ENCODE measurements at regions of chr1 and their contacts with region 1.

Region 1: DNA sequence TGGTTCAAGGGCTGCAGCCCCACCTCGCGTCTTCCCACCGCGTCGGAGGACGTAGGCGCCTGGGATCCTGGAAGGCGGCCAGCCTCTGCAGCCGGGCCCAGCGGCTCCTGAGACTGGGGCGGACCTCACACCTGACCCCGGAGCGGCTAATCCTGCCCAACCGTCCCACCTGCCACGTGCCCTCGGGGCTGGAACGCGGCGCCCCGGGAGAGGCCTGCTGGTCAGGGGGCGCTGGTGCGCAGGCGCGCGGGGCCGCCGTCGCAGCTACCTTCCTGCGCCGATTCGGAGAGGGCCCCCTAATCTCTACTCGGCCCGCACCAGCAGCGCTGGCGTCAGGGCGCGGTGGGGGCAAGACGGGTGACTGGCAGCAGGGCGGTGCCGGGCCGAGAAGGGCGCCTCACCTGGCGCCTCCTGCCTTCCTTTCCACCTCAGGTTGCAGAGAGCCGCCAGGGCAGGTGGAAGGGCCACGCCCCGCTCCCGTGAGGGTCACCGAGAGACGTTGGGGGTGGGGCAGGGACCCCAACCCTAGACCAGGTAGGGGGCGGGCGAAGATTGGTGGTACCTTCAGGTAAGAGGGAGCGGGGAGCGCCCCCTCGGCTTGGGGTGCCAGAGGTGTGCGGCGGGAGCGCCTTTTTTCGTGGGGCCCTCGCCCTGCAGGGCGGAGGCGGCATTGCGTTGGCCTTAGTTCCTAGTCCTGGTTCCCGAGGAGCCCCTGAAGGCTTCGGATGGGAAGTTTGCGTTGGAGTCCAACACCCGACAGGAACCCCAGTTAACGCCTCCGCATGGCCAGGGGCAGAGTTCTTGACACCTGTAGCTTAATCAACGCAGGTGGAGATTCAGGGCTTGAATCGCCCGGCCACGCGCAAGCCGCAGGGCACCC is at the start of gene TDRD5:
- DNase-seq: no peak
- H3K4me3 ChIP-seq: no peak within 1 kb of the TSS
- H3K27ac ChIP-seq: no peak within 1 kb of the TSS
- H3K4me1 ChIP-seq: peaks cover 6% of the 10 kb centered on the region
- H3K27me3 ChIP-seq: no peaks in the 10 kb centered on the region
- CTCF ChIP-seq: no peak
- POLR2A ChIP-seq: no peak
- total RNA-seq, gene TDRD5: not detected

Region 2: DNA sequence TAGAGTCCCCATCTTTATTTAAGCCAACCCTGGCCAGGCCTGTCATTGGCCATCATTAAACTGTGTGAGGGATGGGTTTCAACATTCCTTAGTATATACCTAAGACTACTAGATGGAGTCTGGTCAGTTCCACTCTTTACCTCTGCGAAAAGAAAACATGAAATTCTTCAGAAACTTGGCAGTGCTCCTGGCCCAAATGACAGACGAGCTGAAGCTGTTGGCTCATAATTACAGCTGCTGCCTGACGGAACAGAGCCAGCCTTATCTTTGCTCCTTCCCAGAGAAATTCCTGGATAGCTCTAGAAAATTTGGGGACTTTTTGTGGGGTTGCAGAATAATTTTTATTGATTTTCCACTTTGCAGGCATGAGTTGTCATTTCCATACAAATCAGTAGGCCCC is 46.5 kb before region 1 on chr1:
- intact Hi-C with region 1: loop called (anchors 1 kb)
- DNase-seq: no peak
- H3K4me3 ChIP-seq: no peak overlapping the region
- H3K27ac ChIP-seq: no peak overlapping the region
- H3K4me1 ChIP-seq: no peaks in the 10 kb centered on the region
- H3K27me3 ChIP-seq: no peaks in the 10 kb centered on the region
- CTCF ChIP-seq: no peak
- POLR2A ChIP-seq: no peak

Region 3: DNA sequence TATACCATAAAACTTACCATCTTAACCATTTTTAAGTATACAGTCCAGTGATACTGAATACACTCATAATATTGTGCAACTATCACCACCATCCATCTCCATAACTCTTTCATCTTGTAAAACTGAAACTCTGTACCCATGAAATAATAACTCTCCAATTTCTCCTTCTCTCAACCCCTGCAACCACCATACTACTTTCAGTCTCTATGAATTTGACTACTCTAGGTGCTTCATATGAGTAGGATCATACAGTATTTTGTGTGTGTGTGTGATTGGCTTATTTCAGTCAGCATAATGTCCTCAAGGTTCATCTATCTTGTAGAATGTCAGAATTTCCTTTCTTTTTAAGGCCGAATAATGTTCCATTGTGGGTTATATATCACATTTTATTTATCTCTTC is 33.8 kb before region 1 on chr1:
- intact Hi-C with region 1: no loop called
- DNase-seq: no peak
- H3K4me3 ChIP-seq: no peak overlapping the region
- H3K27ac ChIP-seq: no peak overlapping the region
- H3K4me1 ChIP-seq: no peaks in the 10 kb centered on the region
- H3K27me3 ChIP-seq: no peaks in the 10 kb centered on the region
- CTCF ChIP-seq: no peak
- POLR2A ChIP-seq: no peak

Region 4: GRCh38 chr1:179728271-179728670 is 136.4 kb after region 1 on chr1:
- intact Hi-C with region 1: no loop called
- DNase-seq: no peak
- H3K4me3 ChIP-seq: no peak overlapping the region
- H3K27ac ChIP-seq: no peak overlapping the region
- H3K4me1 ChIP-seq: no peaks in the 10 kb centered on the region
- H3K27me3 ChIP-seq: no peaks in the 10 kb centered on the region
- CTCF ChIP-seq: no peak
- POLR2A ChIP-seq: no peak

Region 5: GRCh38 chr1:180103819-180104218 is 512.0 kb after region 1 on chr1:
- intact Hi-C with region 1: no loop called
- DNase-seq: no peak
- H3K4me3 ChIP-seq: no peak overlapping the region
- H3K27ac ChIP-seq: peak overlapping the region; percentile 31
- H3K4me1 ChIP-seq: no peaks in the 10 kb centered on the region
- H3K27me3 ChIP-seq: no peaks in the 10 kb centered on the region
- CTCF ChIP-seq: no peak
- POLR2A ChIP-seq: no peak

Region 6: GRCh38 chr1:181038399-181038873 is 1446.6 kb after region 1 on chr1:
- intact Hi-C with region 1: no loop called
- DNase-seq: no peak
- H3K4me3 ChIP-seq: no peak overlapping the region
- H3K27ac ChIP-seq: no peak overlapping the region
- H3K4me1 ChIP-seq: peaks cover 56% of the 10 kb centered on the region
- H3K27me3 ChIP-seq: no peaks in the 10 kb centered on the region
- CTCF ChIP-seq: peak; percentile 29 to 73 (median 39)
- POLR2A ChIP-seq: no peak